Gastrocnemius medialis (tissue), 4 donors: ENCODE measurements at regions of chr7 and their contacts with region 1.

Region 1: GRCh38 chr7:70693686-70694360 is 438.1 kb upstream of the GALNT17 start:
- DNase-seq: peak; percentile 62 to 87
- ATAC-seq: peak; percentile 74 to 75
- H3K4me3 ChIP-seq: peak overlapping the region; percentile 59 to 95 (median 72)
- H3K27ac ChIP-seq: peak overlapping the region; percentile 80 to 93 (median 86)
- H3K4me1 ChIP-seq: peaks cover 3 to 36% of the 10 kb centered on the region in 2 donors
- H3K27me3 ChIP-seq: no peaks in the 10 kb centered on the region
- CTCF ChIP-seq: peak in 2 of 5 experiments; percentile 31 to 41
- POLR2A ChIP-seq: peak; percentile 92 to 96

Region 2: DNA sequence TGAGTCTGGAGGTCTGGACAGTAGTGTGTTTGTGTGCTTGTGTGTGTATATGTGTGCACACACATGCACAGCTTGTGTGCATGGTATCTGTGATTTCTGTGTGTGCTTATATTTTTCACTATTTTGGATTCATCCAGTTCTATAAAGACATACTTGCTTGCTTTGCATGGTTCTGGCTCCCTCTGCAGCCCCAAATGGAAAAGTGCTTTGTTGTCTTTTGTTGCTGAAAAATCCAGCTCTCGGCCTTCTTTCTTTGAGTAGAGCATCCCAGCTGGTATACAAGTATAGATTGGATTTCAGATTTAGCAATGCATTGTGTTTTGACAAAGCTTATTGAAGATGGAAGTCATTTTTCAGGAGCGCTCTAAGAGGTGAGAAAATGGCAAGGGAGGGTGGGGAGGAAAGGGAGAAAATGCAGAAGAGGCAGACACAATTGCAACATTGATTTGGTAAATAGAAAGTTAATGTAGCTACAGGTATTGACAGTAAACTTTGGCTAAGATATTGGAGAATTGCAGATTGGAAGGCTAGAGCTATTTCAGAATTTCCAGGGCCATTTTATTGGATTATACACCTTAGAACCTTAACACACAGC is 761.7 kb before region 1 on chr7:
- in situ Hi-C with region 1: no loop called
- intact Hi-C with region 1: no loop called
- DNase-seq: no peak
- ATAC-seq: no peak
- H3K4me3 ChIP-seq: no peak overlapping the region
- H3K27ac ChIP-seq: no peak overlapping the region
- H3K4me1 ChIP-seq: no peaks in the 10 kb centered on the region
- H3K27me3 ChIP-seq: no peaks in the 10 kb centered on the region
- CTCF ChIP-seq: peak in 2 of 5 experiments; percentile 37 to 45
- POLR2A ChIP-seq: no peak

Region 3: DNA sequence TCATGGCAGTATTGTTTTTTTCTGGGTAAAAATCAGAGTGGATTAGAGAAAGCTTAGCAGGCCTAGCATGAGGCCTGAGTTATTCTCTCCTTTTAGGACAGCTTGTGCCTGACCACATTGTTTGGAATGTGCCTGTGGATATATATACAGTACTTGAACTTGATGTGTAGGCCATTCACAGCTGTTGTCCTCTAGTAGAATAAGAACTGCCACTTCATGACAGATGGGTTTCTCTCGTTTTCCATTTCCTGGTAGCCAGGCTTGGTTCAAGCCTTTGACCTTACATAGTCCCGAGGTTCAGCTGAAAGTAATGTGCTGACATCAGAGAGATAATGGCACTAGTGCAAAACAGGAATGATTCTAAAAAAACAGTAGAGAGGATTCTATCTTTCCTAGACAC is 621.6 kb before region 1 on chr7:
- in situ Hi-C with region 1: loop called in 1 of 4 experiments (anchors 25 kb)
- intact Hi-C with region 1: no loop called
- DNase-seq: peak in 1 of 2 donors; percentile 26
- ATAC-seq: peak; percentile 86 to 99
- H3K4me3 ChIP-seq: no peak overlapping the region
- H3K27ac ChIP-seq: peak overlapping the region; percentile 26 to 76 (median 52)
- H3K4me1 ChIP-seq: peaks cover 14 to 24% of the 10 kb centered on the region in 2 donors
- H3K27me3 ChIP-seq: no peaks in the 10 kb centered on the region
- CTCF ChIP-seq: no peak
- POLR2A ChIP-seq: no peak

Region 4: DNA sequence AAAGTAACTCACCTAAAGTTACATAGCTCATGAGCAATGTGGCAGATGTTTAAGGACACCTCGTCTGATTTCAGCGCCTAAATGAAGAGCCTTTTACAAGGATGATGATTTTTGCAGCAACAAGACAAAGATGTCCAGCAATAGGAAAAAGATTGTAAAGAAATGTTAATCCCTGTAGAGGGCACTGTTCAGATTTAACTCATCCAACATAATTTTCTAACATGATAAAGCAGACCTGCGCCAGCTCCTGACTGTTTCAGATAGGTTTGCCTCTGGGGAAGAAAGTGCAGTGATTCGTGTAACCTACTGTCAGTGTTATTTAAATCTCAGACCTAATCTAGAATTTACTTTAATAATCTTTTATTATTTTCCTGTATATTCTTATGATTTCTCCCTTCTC is 500.3 kb before region 1 on chr7:
- in situ Hi-C with region 1: no loop called
- intact Hi-C with region 1: loop called (anchors 5 kb)
- DNase-seq: no peak
- ATAC-seq: no peak
- H3K4me3 ChIP-seq: no peak overlapping the region
- H3K27ac ChIP-seq: no peak overlapping the region
- H3K4me1 ChIP-seq: no peaks in the 10 kb centered on the region
- H3K27me3 ChIP-seq: no peaks in the 10 kb centered on the region
- CTCF ChIP-seq: no peak
- POLR2A ChIP-seq: no peak

Region 5: DNA sequence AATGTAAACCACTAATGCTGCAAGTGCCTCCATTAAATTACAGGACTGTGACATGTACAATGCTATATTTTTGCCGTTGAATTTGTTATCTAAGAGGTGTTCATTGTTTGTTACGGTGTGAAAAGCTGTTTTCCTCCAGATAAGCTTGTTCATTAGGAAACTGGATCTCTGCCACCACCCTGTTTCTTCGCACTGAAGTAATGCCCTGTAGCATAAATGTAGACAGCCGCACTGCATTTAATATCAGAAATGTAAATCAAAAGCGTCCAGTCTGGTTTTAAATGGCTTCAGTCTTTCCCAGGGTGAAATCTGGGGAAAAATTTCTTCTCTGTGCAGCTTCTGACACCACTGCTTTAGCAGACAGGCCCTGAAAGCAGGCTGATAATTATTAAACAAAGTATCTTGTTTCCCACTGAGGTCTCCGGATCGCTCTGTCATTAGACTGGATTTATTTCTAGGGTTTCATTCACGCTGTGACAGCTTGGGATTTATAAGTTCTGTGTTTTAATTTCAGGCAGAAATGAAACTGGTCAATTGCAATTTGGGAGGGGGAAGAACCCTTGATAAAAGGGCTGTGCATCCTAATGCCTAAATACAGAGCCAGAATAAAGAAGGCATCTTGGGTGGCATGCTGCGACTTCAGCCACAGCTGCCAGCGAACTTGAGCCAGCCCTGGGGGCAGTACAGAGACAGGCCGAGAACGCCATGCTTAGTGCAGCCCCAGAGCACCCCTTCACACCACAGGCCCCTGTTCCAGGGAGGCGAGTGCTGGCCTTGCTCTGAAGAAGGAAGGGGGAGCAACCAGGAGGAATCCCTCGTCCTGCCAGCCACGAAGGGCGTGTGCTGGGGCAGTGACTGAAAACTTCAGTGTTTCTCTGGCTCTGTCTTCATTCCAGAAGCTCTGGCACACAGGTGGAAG is 109.6 kb before region 1 on chr7:
- in situ Hi-C with region 1: no loop called
- intact Hi-C with region 1: loop called (anchors 5 kb)
- DNase-seq: no peak
- ATAC-seq: no peak
- H3K4me3 ChIP-seq: no peak overlapping the region
- H3K27ac ChIP-seq: no peak overlapping the region
- H3K4me1 ChIP-seq: peaks cover 5 to 10% of the 10 kb centered on the region in 2 donors
- H3K27me3 ChIP-seq: no peaks in the 10 kb centered on the region
- CTCF ChIP-seq: no peak
- POLR2A ChIP-seq: no peak

Region 6: DNA sequence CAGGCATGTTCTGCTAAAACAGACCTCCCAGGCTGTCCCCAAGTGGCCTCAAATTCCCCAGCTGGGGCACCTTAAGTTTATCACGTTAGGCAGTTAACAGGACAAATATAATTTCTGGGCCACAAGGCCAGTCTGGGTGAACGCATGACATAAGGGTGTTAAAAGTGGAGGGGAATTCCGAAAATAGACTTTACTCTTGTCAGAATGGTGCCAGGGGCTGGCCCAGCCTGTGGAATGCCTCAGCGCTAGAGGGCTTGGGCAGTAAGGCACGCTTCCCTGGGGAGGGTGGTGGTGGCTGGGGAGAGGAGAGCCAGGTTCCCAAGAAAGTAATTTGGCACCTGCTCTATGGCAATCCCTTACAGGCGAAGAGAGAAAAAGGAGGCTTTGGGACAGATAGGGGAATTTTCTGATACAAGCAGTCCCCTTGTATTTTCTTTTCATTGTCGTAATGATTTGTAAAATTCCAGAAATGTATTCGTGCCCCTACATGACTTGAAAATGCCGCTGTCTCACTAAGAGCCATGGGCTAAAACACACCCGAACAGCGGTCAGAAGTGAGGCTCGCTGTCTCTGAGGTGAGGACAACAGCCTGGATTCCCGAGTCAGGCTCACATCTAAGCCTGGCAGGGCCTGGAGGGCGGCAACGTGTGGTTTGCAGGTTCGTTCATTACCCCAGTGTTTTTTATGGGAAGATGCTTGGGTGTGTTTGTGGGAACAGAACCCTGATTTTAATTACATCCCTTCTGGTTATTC is 25.0 kb before region 1 on chr7:
- in situ Hi-C with region 1: no loop called
- intact Hi-C with region 1: loop called (anchors 1 kb)
- DNase-seq: peak; percentile 58 to 82
- ATAC-seq: peak; percentile 95 to 98
- H3K4me3 ChIP-seq: no peak overlapping the region
- H3K27ac ChIP-seq: peak overlapping the region; percentile 13 to 59 (median 46)
- H3K4me1 ChIP-seq: peaks cover 7 to 20% of the 10 kb centered on the region in 2 donors
- H3K27me3 ChIP-seq: no peaks in the 10 kb centered on the region
- CTCF ChIP-seq: no peak
- POLR2A ChIP-seq: no peak

Region 7: GRCh38 chr7:70829221-70830059 is 135.6 kb after region 1 on chr7:
- in situ Hi-C with region 1: no loop called
- intact Hi-C with region 1: no loop called
- DNase-seq: peak; percentile 28 to 38
- ATAC-seq: peak; percentile 62 to 76
- H3K4me3 ChIP-seq: no peak overlapping the region
- H3K27ac ChIP-seq: no peak overlapping the region
- H3K4me1 ChIP-seq: no peaks in the 10 kb centered on the region
- H3K27me3 ChIP-seq: peaks cover 0 to 3% (median 0%) of the 10 kb centered on the region in 3 donors
- CTCF ChIP-seq: peak; percentile 53 to 89 (median 71)
- POLR2A ChIP-seq: no peak